Panc1 (cell line): ENCODE measurements at regions of chr17 and their contacts with region 1.

Region 1: DNA sequence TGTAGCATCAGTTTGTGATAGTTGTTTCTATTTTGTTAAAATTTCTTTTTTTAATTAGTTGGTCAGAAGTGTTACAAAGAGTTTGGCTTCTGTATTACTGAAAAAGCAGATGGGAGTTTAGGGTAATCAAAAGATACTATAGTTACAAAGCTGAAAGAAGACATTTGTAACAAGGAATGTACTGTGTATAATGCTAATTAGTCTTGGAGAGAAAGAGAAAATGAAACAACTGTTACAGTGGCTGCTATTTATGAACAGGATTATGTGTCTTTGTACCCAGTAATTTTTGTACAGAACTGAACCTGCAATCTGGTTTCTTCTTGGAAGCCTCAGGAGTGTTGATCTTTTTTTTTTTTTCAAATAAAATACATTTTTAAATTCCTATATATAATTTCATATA is 14.3 kb downstream of the GDPD1 start:
- DNase-seq: no peak
- ATAC-seq: no peak
- H3K4me3 ChIP-seq: no peak overlapping the region
- H3K27ac ChIP-seq: no peak overlapping the region
- H3K4me1 ChIP-seq: no peaks in the 10 kb centered on the region
- H3K27me3 ChIP-seq: no peaks in the 10 kb centered on the region
- CTCF ChIP-seq: no peak

Region 2: GRCh38 chr17:59311130-59311920 is 76.7 kb after region 1 on chr17:
- CTCF ChIA-PET with region 1: no interaction called
- POLR2A ChIA-PET with region 1: interaction called, 10 read pairs
- in situ Hi-C with region 1: no loop called
- intact Hi-C with region 1: no loop called
- DNase-seq: peak; percentile 41
- ATAC-seq: peak; percentile 97
- H3K4me3 ChIP-seq: no peak overlapping the region
- H3K27ac ChIP-seq: no peak overlapping the region
- H3K4me1 ChIP-seq: no peaks in the 10 kb centered on the region
- H3K27me3 ChIP-seq: no peaks in the 10 kb centered on the region
- CTCF ChIP-seq: peak; percentile 78

Region 3: DNA sequence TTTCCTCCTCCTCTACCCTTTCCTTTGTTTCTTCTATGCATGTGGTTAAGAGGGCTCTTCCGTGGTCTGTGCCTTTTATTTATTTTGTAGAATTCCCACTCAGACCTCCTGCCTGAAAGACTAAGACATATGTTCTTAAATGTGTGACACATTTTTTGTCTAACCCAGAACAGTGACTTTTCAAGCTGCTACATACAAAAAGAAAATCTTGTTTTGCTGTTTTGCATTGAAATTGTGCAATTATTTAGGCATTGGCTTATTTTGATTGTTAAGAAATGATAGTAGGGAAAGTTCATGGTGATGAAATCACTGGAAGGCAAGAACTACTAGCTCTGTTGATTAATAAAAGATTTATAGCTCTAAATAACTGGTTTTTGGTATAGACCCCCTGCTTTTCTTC is 581.3 kb after region 1 on chr17:
- CTCF ChIA-PET with region 1: no interaction called
- POLR2A ChIA-PET with region 1: no interaction called
- in situ Hi-C with region 1: no loop called
- intact Hi-C with region 1: no loop called
- DNase-seq: no peak
- ATAC-seq: no peak
- H3K4me3 ChIP-seq: no peak overlapping the region
- H3K27ac ChIP-seq: peak overlapping the region; percentile 92
- H3K4me1 ChIP-seq: peaks cover 15% of the 10 kb centered on the region
- H3K27me3 ChIP-seq: no peaks in the 10 kb centered on the region
- CTCF ChIP-seq: no peak